ENCODE measurements at regions of chr2 and their contacts with region 1.

Region 1: DNA sequence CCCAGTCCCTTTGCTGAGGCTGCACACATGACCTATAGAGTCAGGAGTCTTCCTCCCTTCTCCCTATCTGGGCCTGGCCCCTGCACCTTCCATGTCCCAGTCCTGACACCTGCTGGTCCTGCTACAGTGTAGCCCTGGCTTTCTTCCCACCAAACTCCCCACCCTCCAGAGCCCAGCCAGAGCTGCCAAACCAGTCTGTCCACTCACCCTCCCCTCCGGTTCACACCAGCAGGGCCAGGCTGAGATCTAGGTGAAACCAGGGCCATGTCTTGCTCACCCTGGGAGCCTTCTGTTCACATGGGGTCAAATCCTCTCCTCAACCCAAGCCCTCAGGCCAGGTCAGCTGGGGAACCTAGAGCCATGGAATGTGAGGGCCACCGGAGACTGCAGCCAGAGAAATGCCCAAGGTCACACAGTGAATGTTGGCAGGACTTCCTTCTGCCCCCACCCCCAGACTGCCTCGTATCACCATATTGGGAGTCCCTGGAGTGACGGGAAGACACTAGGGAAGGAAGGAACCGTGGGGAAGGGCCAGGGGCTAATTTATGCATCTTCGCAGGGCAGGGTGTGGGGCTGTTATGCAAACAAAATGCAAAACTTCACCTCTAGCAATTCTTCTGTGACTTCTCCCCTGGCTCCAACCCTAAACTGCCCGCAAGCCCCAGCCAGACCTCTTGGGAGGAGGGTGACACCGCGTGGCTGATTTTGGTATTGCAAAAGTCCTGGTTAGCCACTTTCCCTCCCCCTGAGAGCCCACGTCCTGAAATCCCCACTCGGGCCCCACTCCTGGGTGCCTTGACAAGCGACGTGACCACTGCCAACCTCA is 14.6 kb downstream of the TNS1 start:
- DNase-seq: peak; percentile 86 to 88
- ATAC-seq: peak; percentile 98

Region 2: DNA sequence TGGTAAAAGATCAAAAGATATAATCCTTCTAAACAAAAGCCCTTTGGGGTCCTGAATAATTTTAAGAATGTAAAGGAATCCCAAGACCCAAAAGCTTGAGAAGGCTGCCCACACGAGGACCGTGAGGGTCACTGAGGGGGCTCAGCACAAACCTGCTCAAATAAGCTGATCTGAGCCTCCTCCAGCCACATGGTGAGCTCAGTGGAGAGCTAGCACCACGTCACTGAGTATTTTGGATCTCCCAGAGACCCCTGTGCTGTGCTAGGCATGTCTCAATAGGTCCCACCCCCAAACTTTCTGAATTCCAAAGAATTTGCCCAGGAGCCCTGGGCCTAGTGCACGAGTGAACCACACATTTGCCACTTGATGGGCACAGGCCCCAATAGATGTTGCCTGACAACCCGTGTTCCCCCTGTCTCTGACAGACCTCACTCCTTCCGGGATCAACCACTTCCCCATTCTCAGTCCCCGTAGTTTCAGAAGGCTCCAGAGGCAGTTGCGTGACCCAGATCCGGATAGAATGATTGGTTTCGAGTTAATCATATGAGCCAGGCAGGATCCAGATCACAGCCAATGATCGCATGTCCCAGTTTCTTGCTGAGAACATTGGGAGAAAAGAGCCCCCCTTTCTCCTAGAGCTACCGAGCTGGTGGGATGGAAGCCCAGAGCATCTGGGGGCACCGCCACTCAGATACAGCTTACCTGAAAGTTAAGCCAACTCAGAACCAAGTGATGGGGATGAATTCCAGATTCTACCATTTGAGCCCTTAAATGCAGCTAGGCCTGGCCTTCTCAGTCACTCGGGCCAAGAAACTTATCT is 189.3 kb before region 1 on chr2:
- intact Hi-C with region 1: loop called in 1 of 2 experiments (anchors 10 kb)
- DNase-seq: peak in 1 of 2 donors; percentile 50
- ATAC-seq: peak; percentile 19

Region 3: GRCh38 chr2:217899231-217900009 is 88.8 kb before region 1 on chr2:
- intact Hi-C with region 1: loop called in 1 of 2 experiments (anchors 10 kb)
- DNase-seq: peak; percentile 57 to 68
- ATAC-seq: peak; percentile 64

Measured in left colon (tissue), 2 donors.